ENCODE measurements at regions of chr16 and their contacts with region 1.

Region 1: DNA sequence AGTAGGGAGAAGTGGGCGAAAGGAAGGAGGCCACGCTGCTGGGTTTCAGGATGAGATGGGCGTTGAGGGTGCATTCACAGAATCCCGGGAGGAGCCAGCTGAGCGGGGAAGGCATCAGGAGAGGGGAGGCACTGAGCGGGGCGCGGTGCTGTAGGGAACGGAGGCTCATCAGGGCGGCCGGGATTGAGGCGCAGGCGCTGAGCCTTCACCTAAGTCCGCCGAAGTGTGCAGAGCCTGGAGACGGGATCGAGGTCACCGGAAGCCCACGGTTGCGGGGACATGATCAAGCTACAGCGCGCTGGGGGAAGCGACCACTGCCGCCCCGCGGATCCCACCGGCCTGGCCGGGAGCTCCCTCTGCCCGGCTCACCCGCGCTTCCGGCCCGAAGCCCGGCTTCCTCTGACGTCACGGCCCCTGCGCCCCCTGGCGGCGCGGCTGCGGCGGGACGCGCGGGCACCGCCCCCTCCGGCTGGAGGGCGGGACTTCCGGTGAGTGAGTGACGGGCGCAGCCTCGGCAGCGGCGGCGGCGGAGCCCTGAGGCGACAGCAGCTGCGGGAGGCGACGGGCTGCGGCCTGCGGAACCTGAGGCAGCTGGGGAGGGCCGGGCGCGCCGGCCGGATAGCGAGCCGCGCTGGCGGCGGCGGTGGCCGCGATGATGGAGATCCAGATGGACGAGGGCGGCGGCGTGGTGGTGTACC is at the start of gene MAPK8IP3:
- DNase-seq: peak; percentile 87 to 99 (median 95)
- H3K4me3 ChIP-seq: peak within 1 kb of the TSS; percentile 81 to 99
- H3K4me3 Mint-ChIP-seq: peak within 1 kb of the TSS; percentile 90 to 100 (median 99)
- H3K27ac ChIP-seq: peak within 1 kb of the TSS; percentile 88
- H3K27ac Mint-ChIP-seq: peak within 1 kb of the TSS; percentile 95 to 100 (median 99)
- H3K4me1 ChIP-seq: peaks cover 40% of the 10 kb centered on the region
- H3K4me1 Mint-ChIP-seq: peaks cover 17 to 46% (median 29%) of the 10 kb centered on the region in 4 donors
- H3K27me3 ChIP-seq: no peaks in the 10 kb centered on the region
- H3K27me3 Mint-ChIP-seq: no peaks in the 10 kb centered on the region
- total RNA-seq, gene MAPK8IP3: 238 to 248 TPM

Region 2: GRCh38 chr16:1167276-1168107 is 538.3 kb before region 1 on chr16:
- CTCF ChIA-PET with region 1: no interaction called
- POLR2A ChIA-PET with region 1: no interaction called
- intact Hi-C with region 1: no loop called
- DNase-seq: no peak
- H3K4me3 ChIP-seq: no peak overlapping the region
- H3K4me3 Mint-ChIP-seq: no peak overlapping the region
- H3K27ac ChIP-seq: no peak overlapping the region
- H3K27ac Mint-ChIP-seq: no peak overlapping the region
- H3K4me1 ChIP-seq: no peaks in the 10 kb centered on the region
- H3K4me1 Mint-ChIP-seq: no peaks in the 10 kb centered on the region
- H3K27me3 ChIP-seq: no peaks in the 10 kb centered on the region
- H3K27me3 Mint-ChIP-seq: peaks cover 1 to 4% of the 10 kb centered on the region in 2 donors

Region 3: GRCh38 chr16:1420111-1420540 is 285.7 kb before region 1 on chr16:
- CTCF ChIA-PET with region 1: interaction called, 4 read pairs
- POLR2A ChIA-PET with region 1: interaction called, 13 read pairs
- intact Hi-C with region 1: loop called (anchors 2 kb)
- DNase-seq: no peak
- H3K4me3 ChIP-seq: peak overlapping the region; percentile 64 to 78
- H3K4me3 Mint-ChIP-seq: peak overlapping the region; percentile 79 to 97 (median 92)
- H3K27ac ChIP-seq: peak overlapping the region; percentile 85
- H3K27ac Mint-ChIP-seq: peak overlapping the region; percentile 64 to 100 (median 91)
- H3K4me1 ChIP-seq: peaks cover 12% of the 10 kb centered on the region
- H3K4me1 Mint-ChIP-seq: peaks cover 5 to 29% (median 15%) of the 10 kb centered on the region in 4 donors
- H3K27me3 ChIP-seq: no peaks in the 10 kb centered on the region
- H3K27me3 Mint-ChIP-seq: peaks cover 0 to 3% of the 10 kb centered on the region in 2 donors

Region 4: DNA sequence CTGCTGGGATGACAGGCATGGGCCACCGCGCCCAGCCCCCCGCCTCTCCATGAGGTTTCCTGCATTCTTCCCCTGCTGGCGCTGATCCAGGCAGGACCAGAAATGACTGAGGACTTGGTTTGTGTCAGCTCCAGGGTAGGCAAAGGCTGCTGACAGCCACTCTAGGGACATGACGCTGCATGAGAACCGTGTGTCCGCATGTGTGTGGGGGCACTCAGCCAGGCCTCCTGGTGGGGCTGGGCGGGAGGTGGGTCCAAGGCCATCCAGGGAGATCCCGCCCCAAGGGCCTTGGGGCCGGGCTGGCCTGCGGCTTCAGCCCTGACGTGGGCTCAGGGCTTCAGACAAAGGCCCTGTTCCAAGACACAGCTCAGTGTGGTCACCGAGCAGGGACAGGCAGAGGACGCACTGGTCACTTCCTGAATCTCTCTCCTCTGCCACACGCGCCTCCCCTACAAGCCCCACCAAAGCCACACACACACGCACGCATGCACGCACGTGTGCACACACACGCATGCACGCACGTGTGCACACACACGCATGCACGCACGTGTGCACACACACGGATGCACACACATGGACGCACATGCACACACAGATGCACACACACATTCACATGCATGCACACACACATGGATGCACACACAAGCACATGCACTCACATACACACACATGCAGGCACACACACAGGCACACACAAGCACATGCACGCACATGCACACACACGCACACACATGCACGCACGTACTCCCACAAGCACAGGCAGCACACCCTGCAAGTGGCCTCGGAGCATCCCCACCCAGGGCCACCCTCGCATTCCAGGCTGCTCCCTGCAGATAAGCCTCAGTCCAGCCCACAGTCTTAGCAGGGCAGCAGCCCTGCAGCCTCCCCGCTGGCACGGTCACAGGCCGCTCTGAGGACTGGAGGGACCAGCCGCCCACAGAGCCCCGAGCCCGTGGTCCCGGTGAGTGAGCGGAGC is 177.7 kb before region 1 on chr16:
- CTCF ChIA-PET with region 1: no interaction called
- POLR2A ChIA-PET with region 1: interaction called, 10 read pairs
- intact Hi-C with region 1: loop called (anchors 5 kb)
- DNase-seq: no peak
- H3K4me3 ChIP-seq: no peak overlapping the region
- H3K4me3 Mint-ChIP-seq: peak overlapping the region in 5 of 8 donors; percentile 59 to 76 (median 67)
- H3K27ac ChIP-seq: no peak overlapping the region
- H3K27ac Mint-ChIP-seq: peak overlapping the region; percentile 43 to 91 (median 83)
- H3K4me1 ChIP-seq: peaks cover 46% of the 10 kb centered on the region
- H3K4me1 Mint-ChIP-seq: peaks cover 16 to 43% (median 28%) of the 10 kb centered on the region in 4 donors
- H3K27me3 ChIP-seq: no peaks in the 10 kb centered on the region
- H3K27me3 Mint-ChIP-seq: no peaks in the 10 kb centered on the region

Region 5: DNA sequence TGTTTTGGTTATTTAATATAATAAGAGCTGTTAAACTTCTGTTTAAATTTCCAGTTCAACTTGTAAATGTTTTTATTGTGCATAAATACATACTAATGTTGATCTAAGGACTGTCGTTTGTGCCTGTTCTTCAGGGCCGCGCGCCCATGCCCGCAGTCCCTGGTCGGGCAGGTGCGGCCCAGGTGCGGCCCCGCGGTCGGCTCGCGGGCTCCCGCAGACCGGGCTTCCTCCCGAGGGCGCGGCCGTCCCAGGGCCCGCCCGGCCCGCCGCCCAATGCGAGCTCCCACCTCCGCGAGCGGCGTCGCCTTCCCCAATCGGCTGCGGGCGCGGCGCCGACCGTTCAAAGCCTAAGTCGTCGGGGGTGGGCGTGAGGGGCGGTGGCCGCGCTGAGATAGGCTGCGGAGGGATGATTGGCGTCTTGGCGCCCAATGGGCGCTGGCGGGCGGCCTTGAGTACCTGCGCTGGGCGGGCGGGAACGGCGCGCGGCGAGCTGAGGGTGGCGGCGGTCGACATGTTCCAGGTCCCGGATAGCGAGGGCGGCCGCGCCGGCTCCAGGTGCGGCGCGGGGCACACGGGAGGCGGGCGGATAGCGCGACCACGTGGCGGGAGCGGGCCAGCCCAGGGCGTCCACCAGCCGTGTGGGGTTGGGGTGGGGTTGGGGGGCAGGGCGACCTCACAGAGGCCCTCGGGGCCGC is 27.9 kb before region 1 on chr16 and contains the start of gene JPT2:
- CTCF ChIA-PET with region 1: interaction called, 23 read pairs
- POLR2A ChIA-PET with region 1: interaction called, 75 read pairs
- intact Hi-C with region 1: loop called (anchors 1 kb)
- DNase-seq: peak; percentile 93 to 95 (median 95)
- H3K4me3 ChIP-seq: peak within 1 kb of the TSS; percentile 46 to 73
- H3K4me3 Mint-ChIP-seq: peak within 1 kb of the TSS; percentile 86 to 94 (median 90)
- H3K27ac ChIP-seq: peak within 1 kb of the TSS; percentile 70
- H3K27ac Mint-ChIP-seq: peak within 1 kb of the TSS; percentile 77 to 95 (median 86)
- H3K4me1 ChIP-seq: peaks cover 28% of the 10 kb centered on the region
- H3K4me1 Mint-ChIP-seq: peaks cover 13 to 49% (median 29%) of the 10 kb centered on the region in 4 donors
- H3K27me3 ChIP-seq: no peaks in the 10 kb centered on the region
- H3K27me3 Mint-ChIP-seq: no peaks in the 10 kb centered on the region
- total RNA-seq, gene JPT2: 38.1 to 43.1 TPM

Region 6: DNA sequence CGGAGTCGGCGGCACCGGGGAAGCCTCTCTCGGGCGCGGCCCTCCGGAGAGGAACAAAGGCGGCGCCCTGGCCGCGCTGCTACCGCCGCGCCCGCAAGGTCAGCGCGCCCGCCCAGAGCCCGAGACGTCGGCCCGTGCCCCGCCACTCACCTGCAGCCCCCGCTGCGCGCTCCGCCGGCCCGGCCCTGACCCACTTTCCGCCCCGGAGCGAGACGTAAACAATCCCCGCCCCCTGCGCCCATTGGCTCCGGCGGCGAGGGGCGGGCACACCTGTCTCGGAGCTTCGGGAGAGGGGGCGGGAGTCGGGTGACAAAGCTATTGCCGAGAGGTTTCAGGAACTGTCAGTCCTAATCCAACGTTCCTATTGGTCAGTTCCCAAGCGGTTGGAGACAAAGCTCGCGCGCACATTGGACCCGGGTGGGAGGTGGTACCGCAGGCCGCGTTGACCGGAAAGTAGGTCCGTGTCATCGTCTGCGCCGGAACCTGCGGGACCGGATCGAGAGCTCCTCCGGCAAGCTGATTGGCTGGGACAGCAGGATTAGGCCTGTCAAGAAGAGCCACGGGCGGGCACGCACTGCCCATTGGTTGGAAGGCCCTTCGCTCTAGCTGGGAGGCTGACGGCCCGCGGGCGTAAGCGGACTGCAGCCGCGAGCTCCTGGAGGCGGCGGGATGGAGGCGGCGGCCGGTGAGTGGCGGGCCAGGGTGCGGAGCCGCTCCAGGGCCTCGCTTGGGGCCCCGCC is 76.7 kb after region 1 on chr16 and contains the starts of genes NUBP2 and SPSB3:
- CTCF ChIA-PET with region 1: interaction called, 9 read pairs
- POLR2A ChIA-PET with region 1: interaction called, 56 read pairs
- intact Hi-C with region 1: loop called (anchors 1 kb)
- DNase-seq: peak; percentile 97 to 99 (median 99)
- H3K4me3 ChIP-seq: peak within 1 kb of the TSS; percentile 69 to 88
- H3K4me3 Mint-ChIP-seq: peak within 1 kb of the TSS; percentile 91 to 96 (median 94)
- H3K27ac ChIP-seq: peak within 1 kb of the TSS; percentile 79
- H3K27ac Mint-ChIP-seq: peak within 1 kb of the TSS; percentile 92 to 97 (median 94)
- H3K4me1 ChIP-seq: peaks cover 43% of the 10 kb centered on the region
- H3K4me1 Mint-ChIP-seq: peaks cover 13 to 46% (median 30%) of the 10 kb centered on the region in 4 donors
- H3K27me3 ChIP-seq: no peaks in the 10 kb centered on the region
- H3K27me3 Mint-ChIP-seq: no peaks in the 10 kb centered on the region
- total RNA-seq, gene NUBP2: 55.9 to 59.4 TPM
- total RNA-seq, gene SPSB3: 133 to 144 TPM

Measured in CD4-positive, alpha-beta memory T cell (primary cell).